Esophagus squamous epithelium (tissue), 5 donors: ENCODE measurements at regions of chr2 and their contacts with region 1.

Region 1: GRCh38 chr2:120343433-120344105 is 2.4 kb upstream of the INHBB start:
- DNase-seq: no peak
- H3K4me3 ChIP-seq: peak overlapping the region; percentile 29 to 75 (median 52)
- H3K27ac ChIP-seq: peak overlapping the region in 2 of 4 donors; percentile 58 to 78
- H3K4me1 ChIP-seq: peaks cover 25 to 48% (median 35%) of the 10 kb centered on the region in 3 donors
- H3K27me3 ChIP-seq: peaks cover 7 to 99% (median 23%) of the 10 kb centered on the region in 4 donors
- CTCF ChIP-seq: peak; percentile 50 to 81 (median 76)
- POLR2A ChIP-seq: no peak

Region 2: GRCh38 chr2:120552800-120553481 is 209.4 kb after region 1 on chr2:
- intact Hi-C with region 1: loop called (anchors 10 kb)
- DNase-seq: no peak
- H3K4me3 ChIP-seq: peak overlapping the region in 1 of 4 donors; percentile 31
- H3K27ac ChIP-seq: peak overlapping the region in 2 of 4 donors; percentile 39 to 53
- H3K4me1 ChIP-seq: peaks cover 0 to 36% (median 21%) of the 10 kb centered on the region in 3 donors
- H3K27me3 ChIP-seq: peaks cover 0 to 46% (median 0%) of the 10 kb centered on the region in 4 donors
- CTCF ChIP-seq: peak; percentile 19 to 82 (median 74)
- POLR2A ChIP-seq: no peak

Region 3: DNA sequence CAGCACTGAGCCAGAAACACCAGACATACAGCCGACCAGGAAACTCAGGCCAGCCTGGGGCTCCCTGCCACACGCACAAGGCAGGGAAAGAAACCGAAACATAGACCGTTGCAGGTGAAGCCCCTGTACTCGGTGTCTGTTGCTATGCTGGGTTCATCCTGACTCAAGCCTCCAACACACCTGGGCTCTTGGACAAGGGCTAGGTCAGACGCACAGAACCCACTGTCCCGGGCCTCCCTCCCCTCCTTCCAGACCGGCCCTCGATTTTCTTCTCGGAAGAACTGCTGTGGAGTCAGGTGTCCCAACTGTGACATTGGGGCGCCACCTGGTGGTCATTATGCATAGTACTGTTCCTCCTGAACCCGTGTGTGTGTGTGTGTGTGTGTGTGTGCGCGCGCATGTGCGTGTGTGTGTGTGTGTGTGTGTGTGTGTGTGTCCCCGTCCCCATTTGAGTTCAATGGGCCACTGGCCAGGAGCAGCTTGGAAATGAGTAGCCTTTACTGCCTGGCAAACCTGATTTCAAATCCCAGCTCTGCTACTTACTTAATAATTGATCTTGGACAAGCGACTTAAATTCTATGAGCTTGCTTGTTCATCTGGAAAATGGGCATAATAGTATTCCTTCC is 336.7 kb after region 1 on chr2:
- intact Hi-C with region 1: loop called (anchors 5 kb)
- DNase-seq: peak; percentile 16
- H3K4me3 ChIP-seq: no peak overlapping the region
- H3K27ac ChIP-seq: no peak overlapping the region
- H3K4me1 ChIP-seq: peaks cover 0 to 10% (median 0%) of the 10 kb centered on the region in 3 donors
- H3K27me3 ChIP-seq: peaks cover 0 to 70% (median 0%) of the 10 kb centered on the region in 4 donors
- CTCF ChIP-seq: peak; percentile 27 to 82 (median 69)
- POLR2A ChIP-seq: no peak